ENCODE measurements at regions of chr6 and their contacts with region 1.

Region 1: GRCh38 chr6:31271641-31272357 is at the start of gene HLA-C:
- DNase-seq: peak; percentile 97 to 99 (median 98)
- H3K4me3 ChIP-seq: peak within 1 kb of the TSS; percentile 64 to 90 (median 78)
- H3K4me3 Mint-ChIP-seq: peak within 1 kb of the TSS; percentile 93 to 94
- H3K27ac ChIP-seq: peak within 1 kb of the TSS; percentile 90 to 100
- H3K27ac Mint-ChIP-seq: peak within 1 kb of the TSS; percentile 99 to 100 (median 100)
- H3K4me1 ChIP-seq: peaks cover 29 to 43% of the 10 kb centered on the region in 2 donors
- H3K4me1 Mint-ChIP-seq: peaks cover 58% of the 10 kb centered on the region
- H3K27me3 ChIP-seq: no peaks in the 10 kb centered on the region
- H3K27me3 Mint-ChIP-seq: peaks cover 2 to 20% (median 4%) of the 10 kb centered on the region in 3 donors
- CTCF ChIP-seq: no peak
- polyA plus RNA-seq, gene HLA-C: 1,088 to 2,224 (median 1,829) TPM

Region 2: DNA sequence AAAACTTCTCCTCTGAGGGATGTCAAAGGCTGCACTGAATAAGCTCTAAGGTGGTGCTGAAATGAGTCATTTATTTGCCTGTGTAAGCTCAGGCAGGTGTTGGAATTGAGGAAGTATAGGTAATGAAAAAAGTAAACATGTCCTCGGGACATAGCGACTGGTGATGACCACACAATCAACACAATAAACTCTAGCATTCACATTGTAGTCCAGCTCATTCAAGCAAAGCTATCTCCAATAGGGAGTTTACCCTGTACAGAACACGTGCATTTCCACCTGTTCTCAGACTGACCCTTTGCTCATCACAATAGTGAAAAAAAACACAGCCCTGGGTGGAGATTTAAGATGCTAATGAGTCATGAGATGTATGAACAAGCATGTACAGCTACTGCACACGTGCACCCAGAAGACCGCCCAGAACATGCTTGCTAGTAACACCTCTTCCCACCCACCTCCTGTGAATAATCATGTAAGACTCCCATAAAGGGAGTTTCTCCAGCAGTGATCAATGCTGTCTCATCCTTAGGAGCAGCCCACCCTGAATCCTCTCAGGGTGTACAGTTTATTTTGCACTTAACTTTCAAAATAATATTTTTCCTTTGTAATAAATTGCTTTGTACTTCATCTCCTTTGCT is 68.3 kb before region 1 on chr6:
- intact Hi-C with region 1: loop called (anchors 2 to 5 kb)
- DNase-seq: peak; percentile 60 to 87 (median 71)
- H3K4me3 ChIP-seq: peak overlapping the region; percentile 38 to 100 (median 96)
- H3K4me3 Mint-ChIP-seq: peak overlapping the region; percentile 79 to 94
- H3K27ac ChIP-seq: peak overlapping the region; percentile 59 to 97
- H3K27ac Mint-ChIP-seq: peak overlapping the region; percentile 94 to 99 (median 97)
- H3K4me1 ChIP-seq: peaks cover 61 to 63% of the 10 kb centered on the region in 2 donors
- H3K4me1 Mint-ChIP-seq: peaks cover 73% of the 10 kb centered on the region
- H3K27me3 ChIP-seq: no peaks in the 10 kb centered on the region
- H3K27me3 Mint-ChIP-seq: peaks cover 0 to 2% (median 1%) of the 10 kb centered on the region in 3 donors
- CTCF ChIP-seq: no peak

Region 3: GRCh38 chr6:31308050-31308844 is 36.4 kb after region 1 on chr6:
- intact Hi-C with region 1: loop called in 1 of 2 experiments (anchors 5 kb)
- DNase-seq: peak; percentile 14 to 33 (median 17)
- H3K4me3 ChIP-seq: peak overlapping the region; percentile 8 to 65 (median 35)
- H3K4me3 Mint-ChIP-seq: peak overlapping the region; percentile 70 to 86
- H3K27ac ChIP-seq: no peak overlapping the region
- H3K27ac Mint-ChIP-seq: no peak overlapping the region
- H3K4me1 ChIP-seq: peaks cover 9 to 10% of the 10 kb centered on the region in 2 donors
- H3K4me1 Mint-ChIP-seq: peaks cover 14% of the 10 kb centered on the region
- H3K27me3 ChIP-seq: peaks cover 25 to 37% of the 10 kb centered on the region in 2 donors
- H3K27me3 Mint-ChIP-seq: peaks cover 17 to 68% (median 60%) of the 10 kb centered on the region in 3 donors
- CTCF ChIP-seq: no peak

Region 4: GRCh38 chr6:31351401-31352309 is 79.9 kb after region 1 on chr6:
- intact Hi-C with region 1: loop called (anchors 2 to 5 kb)
- DNase-seq: peak in 1 of 3 donors; percentile 38
- H3K4me3 ChIP-seq: no peak overlapping the region
- H3K4me3 Mint-ChIP-seq: peak overlapping the region in 1 of 2 donors; percentile 49
- H3K27ac ChIP-seq: no peak overlapping the region
- H3K27ac Mint-ChIP-seq: peak overlapping the region; percentile 22 to 85 (median 77)
- H3K4me1 ChIP-seq: peaks cover 25 to 30% of the 10 kb centered on the region in 2 donors
- H3K4me1 Mint-ChIP-seq: peaks cover 39% of the 10 kb centered on the region
- H3K27me3 ChIP-seq: no peaks in the 10 kb centered on the region
- H3K27me3 Mint-ChIP-seq: peaks cover 2 to 18% (median 2%) of the 10 kb centered on the region in 3 donors
- CTCF ChIP-seq: no peak

Region 5: DNA sequence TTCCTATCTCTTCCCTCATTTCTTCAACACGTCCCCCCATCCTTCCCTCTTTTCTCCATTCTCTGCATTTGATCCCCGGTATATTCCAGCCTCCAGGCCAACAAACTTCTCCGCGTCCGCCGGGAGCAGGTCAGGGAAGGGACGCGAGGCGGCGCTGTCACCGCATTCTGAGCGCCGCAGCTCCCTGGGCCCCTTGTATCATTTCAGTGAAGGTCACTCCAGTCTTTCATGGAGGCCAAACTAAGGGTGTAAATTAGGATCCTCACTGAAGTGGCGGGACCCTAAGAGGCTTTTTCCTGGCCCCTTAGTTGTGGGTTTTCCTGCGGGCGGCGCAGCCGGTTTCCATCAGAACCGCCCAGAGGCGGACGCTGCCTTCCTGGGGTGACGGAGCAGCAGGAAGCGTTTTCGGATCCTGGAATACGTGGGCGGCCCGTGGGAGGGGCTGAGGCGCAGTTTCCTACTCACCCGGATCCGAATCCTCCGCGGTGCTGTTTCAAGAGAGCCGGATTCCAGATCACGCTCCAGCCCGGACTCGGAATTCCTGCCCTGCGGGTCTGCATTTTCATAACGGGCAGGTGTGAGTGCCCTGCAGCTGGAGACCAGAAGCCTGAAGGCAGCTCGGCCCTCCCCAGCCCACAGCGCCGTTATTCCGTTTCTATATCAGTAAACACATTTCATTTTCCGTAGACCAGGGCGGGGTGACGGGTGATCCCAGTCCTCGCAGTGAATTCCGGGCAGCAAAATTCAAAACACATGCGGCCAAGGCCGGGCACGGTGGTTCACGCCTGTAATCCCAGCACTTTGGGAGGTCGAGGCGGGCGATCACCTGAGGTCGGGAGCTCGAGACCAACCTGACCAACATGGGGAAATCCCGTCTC is 128.0 kb after region 1 on chr6:
- intact Hi-C with region 1: loop called in 1 of 2 experiments (anchors 1 kb)
- DNase-seq: peak; percentile 61 to 70 (median 69)
- H3K4me3 ChIP-seq: peak overlapping the region; percentile 71 to 98 (median 93)
- H3K4me3 Mint-ChIP-seq: peak overlapping the region; percentile 97 to 98
- H3K27ac ChIP-seq: peak overlapping the region; percentile 88 to 90
- H3K27ac Mint-ChIP-seq: peak overlapping the region; percentile 95 to 99 (median 98)
- H3K4me1 ChIP-seq: peaks cover 45 to 61% of the 10 kb centered on the region in 2 donors
- H3K4me1 Mint-ChIP-seq: peaks cover 60% of the 10 kb centered on the region
- H3K27me3 ChIP-seq: no peaks in the 10 kb centered on the region
- H3K27me3 Mint-ChIP-seq: peaks cover 0 to 5% (median 3%) of the 10 kb centered on the region in 3 donors
- CTCF ChIP-seq: peak; percentile 95